ENCODE measurements at regions of chr6 and their contacts with region 1.

Region 1: DNA sequence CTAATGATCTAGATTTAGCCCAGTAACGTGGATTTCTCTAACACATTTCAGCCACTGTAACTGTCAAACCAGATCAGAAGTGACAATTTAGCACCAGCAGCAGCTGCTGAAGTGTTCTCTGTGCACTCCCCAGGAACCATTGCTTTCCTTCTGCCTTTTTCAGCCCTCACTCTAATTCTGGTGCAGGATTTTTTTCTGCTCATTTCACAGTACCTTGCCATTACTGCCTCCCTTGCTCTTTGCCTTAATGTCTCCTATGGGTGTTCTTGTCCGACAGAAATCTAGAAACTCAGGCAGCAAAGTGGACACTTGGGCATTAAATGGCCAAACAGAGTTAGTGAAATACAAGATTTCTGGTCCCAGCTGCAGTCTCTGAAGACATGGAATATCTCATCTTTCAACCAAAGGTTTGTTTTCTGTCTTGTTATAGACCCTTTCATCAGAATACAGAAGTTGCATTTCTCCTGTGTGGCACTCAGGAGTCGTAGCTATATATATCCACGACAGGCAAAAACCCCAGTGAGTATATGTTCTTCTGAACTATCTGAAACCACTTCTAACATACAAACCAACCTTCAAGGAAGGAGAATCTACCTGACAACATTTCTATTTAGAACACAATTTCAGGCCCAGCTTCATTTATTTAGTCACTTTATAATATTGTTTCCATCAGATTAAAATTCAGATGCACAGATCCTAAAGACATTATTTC is 92.9 kb downstream of the THEMIS start:
- DNase-seq: no peak
- ATAC-seq: peak; percentile 64
- H3K4me3 ChIP-seq: no peak overlapping the region
- H3K4me3 Mint-ChIP-seq: peak overlapping the region; percentile 31
- H3K27ac ChIP-seq: no peak overlapping the region
- H3K27ac Mint-ChIP-seq: peak overlapping the region; percentile 83
- H3K4me1 ChIP-seq: peaks cover 4% of the 10 kb centered on the region
- H3K4me1 Mint-ChIP-seq: peaks cover 100% of the 10 kb centered on the region
- H3K27me3 ChIP-seq: no peaks in the 10 kb centered on the region
- H3K27me3 Mint-ChIP-seq: no peaks in the 10 kb centered on the region
- CTCF ChIP-seq: no peak

Region 2: GRCh38 chr6:127554435-127555006 is 253.4 kb before region 1 on chr6:
- CTCF ChIA-PET with region 1: no interaction called
- POLR2A ChIA-PET with region 1: no interaction called
- intact Hi-C with region 1: no loop called
- DNase-seq: peak in 5 of 14 experiments; percentile 1 to 35 (median 22)
- ATAC-seq: no peak
- H3K4me3 ChIP-seq: no peak overlapping the region
- H3K4me3 Mint-ChIP-seq: no peak overlapping the region
- H3K27ac ChIP-seq: no peak overlapping the region
- H3K27ac Mint-ChIP-seq: no peak overlapping the region
- H3K4me1 ChIP-seq: no peaks in the 10 kb centered on the region
- H3K4me1 Mint-ChIP-seq: no peaks in the 10 kb centered on the region
- H3K27me3 ChIP-seq: peaks cover 0 to 11% of the 10 kb centered on the region in 2 experiments
- H3K27me3 Mint-ChIP-seq: peaks cover 38% of the 10 kb centered on the region
- CTCF ChIP-seq: no peak

Region 3: GRCh38 chr6:127775371-127775770 is 32.6 kb before region 1 on chr6:
- CTCF ChIA-PET with region 1: no interaction called
- POLR2A ChIA-PET with region 1: no interaction called
- intact Hi-C with region 1: loop called in 1 of 2 experiments (anchors 5 kb)
- DNase-seq: no peak
- ATAC-seq: no peak
- H3K4me3 ChIP-seq: no peak overlapping the region
- H3K4me3 Mint-ChIP-seq: no peak overlapping the region
- H3K27ac ChIP-seq: no peak overlapping the region
- H3K27ac Mint-ChIP-seq: peak overlapping the region; percentile 10
- H3K4me1 ChIP-seq: peaks cover 6% of the 10 kb centered on the region
- H3K4me1 Mint-ChIP-seq: peaks cover 55% of the 10 kb centered on the region
- H3K27me3 ChIP-seq: no peaks in the 10 kb centered on the region
- H3K27me3 Mint-ChIP-seq: no peaks in the 10 kb centered on the region
- CTCF ChIP-seq: no peak

Region 4: DNA sequence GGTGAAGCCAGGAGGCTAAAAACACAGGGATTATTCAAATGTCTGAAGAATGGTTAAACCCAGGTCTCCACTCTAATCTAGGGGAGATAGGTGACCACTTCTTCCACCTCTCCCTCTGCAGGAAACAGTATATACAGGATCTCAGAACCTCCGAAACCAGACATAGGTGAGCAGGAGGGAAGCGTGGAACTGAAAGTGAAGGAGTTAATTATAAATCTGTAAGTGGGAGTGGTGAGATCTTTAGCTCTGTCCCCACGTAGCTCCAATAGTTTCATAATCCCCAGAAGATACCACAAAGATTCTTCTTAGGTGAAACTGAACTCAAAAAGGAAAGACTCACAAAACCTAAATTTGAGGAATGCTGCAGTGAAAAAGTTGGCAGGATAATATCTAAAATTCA is 16.1 kb after region 1 on chr6:
- CTCF ChIA-PET with region 1: interaction called, 3 read pairs
- POLR2A ChIA-PET with region 1: no interaction called
- intact Hi-C with region 1: loop called in 1 of 2 experiments (anchors 2 kb)
- DNase-seq: no peak
- ATAC-seq: no peak
- H3K4me3 ChIP-seq: no peak overlapping the region
- H3K4me3 Mint-ChIP-seq: peak overlapping the region; percentile 39
- H3K27ac ChIP-seq: no peak overlapping the region
- H3K27ac Mint-ChIP-seq: peak overlapping the region; percentile 49
- H3K4me1 ChIP-seq: no peaks in the 10 kb centered on the region
- H3K4me1 Mint-ChIP-seq: peaks cover 90% of the 10 kb centered on the region
- H3K27me3 ChIP-seq: no peaks in the 10 kb centered on the region
- H3K27me3 Mint-ChIP-seq: no peaks in the 10 kb centered on the region
- CTCF ChIP-seq: no peak

Region 5: GRCh38 chr6:127880429-127880828 is 72.5 kb after region 1 on chr6:
- CTCF ChIA-PET with region 1: no interaction called
- POLR2A ChIA-PET with region 1: no interaction called
- intact Hi-C with region 1: no loop called
- DNase-seq: peak in 3 of 14 experiments; percentile 39 to 64 (median 50)
- ATAC-seq: peak; percentile 54
- H3K4me3 ChIP-seq: no peak overlapping the region
- H3K4me3 Mint-ChIP-seq: peak overlapping the region; percentile 69
- H3K27ac ChIP-seq: no peak overlapping the region
- H3K27ac Mint-ChIP-seq: peak overlapping the region; percentile 74
- H3K4me1 ChIP-seq: peaks cover 11% of the 10 kb centered on the region
- H3K4me1 Mint-ChIP-seq: peaks cover 88% of the 10 kb centered on the region
- H3K27me3 ChIP-seq: no peaks in the 10 kb centered on the region
- H3K27me3 Mint-ChIP-seq: no peaks in the 10 kb centered on the region
- CTCF ChIP-seq: no peak

Region 6: DNA sequence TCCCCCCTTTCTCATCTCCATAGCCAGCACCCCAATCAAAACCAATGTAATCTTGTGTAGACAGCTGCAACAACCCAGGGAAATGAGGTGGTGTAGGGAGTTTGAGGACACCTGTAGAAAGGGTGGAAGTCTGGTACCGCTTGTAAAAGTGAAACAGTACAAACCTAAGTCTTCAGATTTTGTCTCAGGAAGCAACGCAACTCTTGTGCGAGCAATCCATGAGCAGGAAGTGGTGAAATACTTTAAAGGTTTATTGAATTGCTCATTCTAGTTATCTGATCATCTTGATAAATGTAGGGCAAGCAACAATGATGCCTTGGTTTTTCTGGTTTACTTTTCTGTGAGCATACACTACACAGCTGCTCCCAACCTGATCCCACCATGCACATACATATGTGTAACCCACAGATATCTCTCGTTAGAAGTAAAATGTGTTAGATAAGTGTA is 164.0 kb after region 1 on chr6:
- CTCF ChIA-PET with region 1: no interaction called
- POLR2A ChIA-PET with region 1: no interaction called
- intact Hi-C with region 1: no loop called
- DNase-seq: peak; percentile 22 to 91 (median 42)
- ATAC-seq: peak; percentile 88
- H3K4me3 ChIP-seq: peak overlapping the region; percentile 53
- H3K4me3 Mint-ChIP-seq: peak overlapping the region; percentile 90
- H3K27ac ChIP-seq: peak overlapping the region; percentile 67 to 84
- H3K27ac Mint-ChIP-seq: peak overlapping the region; percentile 97
- H3K4me1 ChIP-seq: peaks cover 17% of the 10 kb centered on the region
- H3K4me1 Mint-ChIP-seq: peaks cover 75% of the 10 kb centered on the region
- H3K27me3 ChIP-seq: no peaks in the 10 kb centered on the region
- H3K27me3 Mint-ChIP-seq: no peaks in the 10 kb centered on the region
- CTCF ChIP-seq: no peak

Measured in CD4-positive, alpha-beta T cell (primary cell).